Pancreas (tissue), 10 donors: ENCODE measurements at regions of chr19 and their contacts with region 1.

Region 1: GRCh38 chr19:29858000-29858596 is 46.3 kb downstream of the CCNE1 start:
- DNase-seq: peak in 5 of 6 donors; percentile 21 to 78 (median 56)
- ATAC-seq: peak; percentile 81 to 92 (median 87)
- H3K4me3 ChIP-seq: no peak overlapping the region
- H3K27ac ChIP-seq: no peak overlapping the region
- H3K4me1 ChIP-seq: no peaks in the 10 kb centered on the region
- H3K27me3 ChIP-seq: peaks cover 0 to 9% (median 0%) of the 10 kb centered on the region in 4 donors
- CTCF ChIP-seq: peak; percentile 35 to 65 (median 63)

Region 2: DNA sequence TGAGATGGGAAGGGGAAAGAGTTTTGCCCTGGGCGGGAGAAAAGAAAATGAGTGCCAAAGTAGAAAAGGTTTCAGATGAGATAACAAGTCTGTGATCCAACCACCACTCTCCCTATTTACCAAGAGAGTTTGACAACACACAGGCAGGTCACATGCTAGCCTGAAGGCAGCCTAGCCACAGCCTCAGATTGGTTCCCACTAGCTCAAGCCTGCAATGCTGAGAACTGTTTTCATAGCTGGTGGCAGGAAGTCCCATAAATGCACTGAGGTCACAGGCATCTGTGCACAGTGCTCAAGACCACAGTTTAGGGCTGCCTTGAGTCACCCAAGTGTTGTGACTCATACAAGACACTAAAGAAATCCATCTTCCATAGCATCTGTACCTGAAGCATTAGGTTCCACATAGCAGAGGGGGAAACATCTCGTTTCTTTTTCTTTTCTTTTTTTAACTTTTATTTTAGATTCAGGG is 270.5 kb before region 1 on chr19:
- intact Hi-C with region 1: no loop called
- DNase-seq: no peak
- ATAC-seq: no peak
- H3K4me3 ChIP-seq: no peak overlapping the region
- H3K27ac ChIP-seq: no peak overlapping the region
- H3K4me1 ChIP-seq: no peaks in the 10 kb centered on the region
- H3K27me3 ChIP-seq: peaks cover 0 to 5% (median 0%) of the 10 kb centered on the region in 4 donors
- CTCF ChIP-seq: no peak

Region 3: GRCh38 chr19:30649934-30650614 is 792.0 kb after region 1 on chr19:
- intact Hi-C with region 1: loop called in 1 of 3 experiments (anchors 10 kb)
- DNase-seq: peak in 3 of 6 donors; percentile 33 to 72 (median 45)
- ATAC-seq: peak; percentile 72 to 83 (median 76)
- H3K4me3 ChIP-seq: no peak overlapping the region
- H3K27ac ChIP-seq: peak overlapping the region in 3 of 4 donors; percentile 44 to 83 (median 66)
- H3K4me1 ChIP-seq: peaks cover 28 to 38% (median 30%) of the 10 kb centered on the region in 3 donors
- H3K27me3 ChIP-seq: no peaks in the 10 kb centered on the region
- CTCF ChIP-seq: peak; percentile 21 to 63 (median 58)